ENCODE measurements at regions of chr2 and their contacts with region 1.

Region 1: DNA sequence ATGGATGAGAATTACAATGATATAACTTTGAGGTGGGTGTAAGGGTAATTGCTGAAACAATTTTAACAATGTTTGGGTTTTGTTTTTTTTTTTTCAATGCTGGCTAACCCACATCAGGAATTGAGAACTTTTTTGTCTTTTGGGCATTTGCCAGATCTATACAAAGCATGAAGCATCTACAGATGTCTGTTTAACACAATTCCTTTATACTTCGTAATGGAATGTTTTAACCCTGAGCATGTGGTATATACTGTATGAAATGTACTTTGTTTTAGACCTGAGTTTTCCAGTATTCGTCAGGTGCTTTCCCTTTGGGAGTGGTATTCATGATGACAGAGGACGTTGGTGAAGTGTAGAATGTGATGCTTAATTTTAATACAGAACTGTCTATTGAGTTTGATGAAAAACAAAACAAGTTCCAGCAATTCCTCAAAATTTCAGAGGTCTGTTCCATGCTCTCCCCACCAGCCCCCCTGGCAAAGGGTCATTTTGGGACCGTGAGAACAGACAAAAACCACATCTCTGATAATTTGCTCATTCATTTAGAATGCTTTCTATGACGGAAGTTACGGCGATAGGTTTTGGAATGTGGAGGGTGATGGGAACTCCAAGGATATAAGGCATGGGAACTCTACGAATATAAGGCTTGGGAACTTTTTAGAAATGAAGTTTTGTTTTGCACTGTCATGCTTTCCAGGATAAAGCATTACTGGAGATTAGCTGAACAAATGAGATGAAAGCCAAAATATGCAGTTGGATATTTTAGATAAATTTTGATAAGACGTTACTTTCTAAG is 14.1 kb downstream of the LIMS1 start:
- DNase-seq: no peak
- ATAC-seq: peak; percentile 10; the same call in 1 of the 3 replicates
- H3K4me3 ChIP-seq: no peak overlapping the region
- H3K27ac ChIP-seq: no peak overlapping the region
- H3K4me1 ChIP-seq: peaks cover 5 to 11% of the 10 kb centered on the region in 2 experiments; a peak in 2 of 5 replicates
- H3K27me3 ChIP-seq: no peaks in the 10 kb centered on the region
- CTCF ChIP-seq: no peak
- EP300 ChIP-seq: no peak
- POLR2A ChIP-seq: no peak
- RAD21 ChIP-seq: no peak

Region 2: DNA sequence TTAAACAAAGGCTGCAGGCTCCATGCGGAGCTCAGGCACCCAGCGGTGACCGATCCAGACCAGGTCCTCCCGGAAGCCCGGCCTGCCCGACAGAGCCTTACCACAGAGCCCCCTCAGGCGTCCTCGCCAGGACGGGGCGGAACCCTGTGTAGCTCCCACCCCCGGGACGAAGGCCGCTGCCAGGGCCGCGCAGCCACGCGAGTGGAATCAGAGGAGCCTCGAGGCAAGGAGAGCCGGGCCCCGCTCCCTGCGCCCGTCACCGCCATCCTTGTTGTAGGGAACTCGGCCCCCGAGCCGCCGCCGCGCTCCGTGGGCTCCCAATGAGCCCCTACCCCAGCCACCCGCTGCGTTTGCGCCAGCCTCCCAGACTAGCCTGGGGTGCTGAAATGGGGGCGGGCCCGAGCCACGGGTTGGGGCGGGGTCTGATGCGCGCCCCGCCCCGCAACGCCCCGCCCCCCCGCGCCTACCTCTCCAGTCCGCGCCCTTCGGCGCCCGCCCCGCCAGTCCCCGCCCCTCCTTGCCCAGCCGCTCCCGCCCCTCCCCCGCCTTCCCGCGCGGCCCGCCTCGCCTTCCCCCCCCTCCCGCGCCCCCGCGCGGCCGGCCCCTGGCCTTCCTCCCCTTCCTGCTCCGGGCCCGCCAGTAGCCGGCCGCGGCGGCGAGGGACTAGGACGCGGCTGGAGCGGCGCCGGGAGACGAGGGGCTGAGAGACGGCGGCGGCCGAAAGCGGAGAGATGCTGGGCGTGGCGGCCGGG is 14.4 kb before region 1 on chr2 and contains the start of gene LIMS1:
- CTCF ChIA-PET with region 1: no interaction called
- POLR2A ChIA-PET with region 1: interaction called, 21 read pairs
- in situ Hi-C with region 1: no loop called
- intact Hi-C with region 1: no loop called
- DNase-seq: peak; percentile 88 to 97 (median 95)
- ATAC-seq: peak; percentile 90
- H3K4me3 ChIP-seq: peak within 1 kb of the TSS; percentile 86
- H3K27ac ChIP-seq: peak within 1 kb of the TSS; percentile 93
- H3K4me1 ChIP-seq: peaks cover 23 to 25% of the 10 kb centered on the region in 2 experiments
- H3K27me3 ChIP-seq: no peaks in the 10 kb centered on the region
- CTCF ChIP-seq: peak in 1 of 3 experiments; percentile 12; a peak in 1 of 6 replicates
- EP300 ChIP-seq: no peak
- POLR2A ChIP-seq: peak; percentile 96
- RAD21 ChIP-seq: no peak
- polyA plus RNA-seq, gene LIMS1: 52.8 to 81.0 TPM